IMR-90 (cell line): ENCODE measurements at regions of chr14 and their contacts with region 1.

Region 1: GRCh38 chr14:88667555-88668273 is 104.9 kb downstream of the ZC3H14 start:
- DNase-seq: peak; percentile 83
- ATAC-seq: peak; percentile 98
- H3K4me3 ChIP-seq: no peak overlapping the region
- H3K27ac ChIP-seq: no peak overlapping the region
- H3K4me1 ChIP-seq: 0 out of 2 replicates have a peak, but pooled peaks cover 3% of the 10 kb centered on the region
- H3K27me3 ChIP-seq: no peaks in the 10 kb centered on the region
- CTCF ChIP-seq: peak; percentile 91
- POLR2A ChIP-seq: no peak
- RAD21 ChIP-seq: peak; percentile 89

Region 2: DNA sequence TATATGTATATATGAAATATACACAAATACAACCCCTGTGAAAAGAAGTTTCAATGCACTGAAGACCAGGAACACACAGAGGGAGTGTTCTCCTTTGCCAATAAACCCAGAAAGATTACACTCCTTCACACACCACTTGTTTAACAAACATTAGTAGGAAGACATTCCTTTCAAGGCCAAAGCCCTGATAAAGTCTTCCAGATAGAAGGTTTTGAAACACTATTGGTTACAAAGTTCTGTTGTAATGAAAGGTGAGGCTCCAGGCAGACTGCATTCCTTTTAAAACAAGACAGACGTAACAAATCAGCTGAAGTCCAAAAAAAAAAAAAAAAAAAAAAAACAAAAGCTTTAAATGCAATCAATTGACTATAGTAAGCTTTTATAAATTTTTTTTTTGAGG is 193.9 kb before region 1 on chr14:
- CTCF ChIA-PET with region 1: no interaction called
- POLR2A ChIA-PET with region 1: no interaction called
- dilution Hi-C with region 1: no loop called
- in situ Hi-C with region 1: no loop called
- intact Hi-C with region 1: no loop called
- DNase-seq: peak; percentile 38
- ATAC-seq: peak; percentile 54
- H3K4me3 ChIP-seq: no peak overlapping the region
- H3K27ac ChIP-seq: peak overlapping the region; percentile 95; the same call in 1 of the 2 replicates
- H3K4me1 ChIP-seq: peaks cover 30% of the 10 kb centered on the region
- H3K27me3 ChIP-seq: no peaks in the 10 kb centered on the region
- CTCF ChIP-seq: no peak
- POLR2A ChIP-seq: no peak
- RAD21 ChIP-seq: no peak

Region 3: DNA sequence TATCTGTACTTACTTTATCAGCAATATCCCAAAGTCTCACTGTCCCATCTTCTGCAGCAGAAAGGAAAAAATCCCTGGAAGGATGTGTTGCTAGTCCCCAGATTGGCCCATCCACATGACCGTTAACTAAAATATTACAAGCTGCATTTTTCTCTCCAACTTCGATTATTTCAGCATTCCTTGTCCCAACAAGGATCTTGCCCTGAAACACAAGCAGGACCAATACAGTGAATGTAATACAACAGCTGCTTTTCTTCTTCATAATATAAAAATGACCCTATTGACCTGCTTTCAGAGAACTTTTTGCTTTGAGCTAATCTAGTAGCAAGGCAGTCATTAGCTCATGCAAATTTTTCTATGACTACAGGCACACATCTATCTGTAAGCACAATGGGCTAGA is 46.6 kb before region 1 on chr14:
- CTCF ChIA-PET with region 1: no interaction called
- POLR2A ChIA-PET with region 1: no interaction called
- dilution Hi-C with region 1: no loop called
- in situ Hi-C with region 1: no loop called
- intact Hi-C with region 1: no loop called
- DNase-seq: peak; percentile 21
- ATAC-seq: peak; percentile 81
- H3K4me3 ChIP-seq: no peak overlapping the region
- H3K27ac ChIP-seq: no peak overlapping the region
- H3K4me1 ChIP-seq: no peaks in the 10 kb centered on the region
- H3K27me3 ChIP-seq: no peaks in the 10 kb centered on the region
- CTCF ChIP-seq: no peak
- POLR2A ChIP-seq: no peak
- RAD21 ChIP-seq: no peak

Region 4: GRCh38 chr14:88868558-88869159 is 200.9 kb after region 1 on chr14:
- CTCF ChIA-PET with region 1: interaction called, 3 read pairs
- POLR2A ChIA-PET with region 1: no interaction called
- dilution Hi-C with region 1: no loop called
- in situ Hi-C with region 1: no loop called
- intact Hi-C with region 1: loop called (anchors 1 kb)
- DNase-seq: peak; percentile 23
- ATAC-seq: 0 out of 2 replicates have a peak, but pooled peaks have one; percentile 40
- H3K4me3 ChIP-seq: no peak overlapping the region
- H3K27ac ChIP-seq: no peak overlapping the region
- H3K4me1 ChIP-seq: peaks cover 2% of the 10 kb centered on the region
- H3K27me3 ChIP-seq: no peaks in the 10 kb centered on the region
- CTCF ChIP-seq: peak; percentile 29
- POLR2A ChIP-seq: no peak
- RAD21 ChIP-seq: peak; percentile 52

Region 5: GRCh38 chr14:89013084-89013504 is 345.4 kb after region 1 on chr14:
- CTCF ChIA-PET with region 1: interaction called, 5 read pairs
- POLR2A ChIA-PET with region 1: no interaction called
- dilution Hi-C with region 1: no loop called
- in situ Hi-C with region 1: loop called (anchors 5 kb)
- intact Hi-C with region 1: loop called (anchors 1 kb)
- DNase-seq: peak; percentile 11
- ATAC-seq: no peak
- H3K4me3 ChIP-seq: no peak overlapping the region
- H3K27ac ChIP-seq: no peak overlapping the region
- H3K4me1 ChIP-seq: no peaks in the 10 kb centered on the region; the same call in 1 of the 2 replicates
- H3K27me3 ChIP-seq: no peaks in the 10 kb centered on the region
- CTCF ChIP-seq: peak; percentile 51
- POLR2A ChIP-seq: no peak
- RAD21 ChIP-seq: peak; percentile 59

Region 6: DNA sequence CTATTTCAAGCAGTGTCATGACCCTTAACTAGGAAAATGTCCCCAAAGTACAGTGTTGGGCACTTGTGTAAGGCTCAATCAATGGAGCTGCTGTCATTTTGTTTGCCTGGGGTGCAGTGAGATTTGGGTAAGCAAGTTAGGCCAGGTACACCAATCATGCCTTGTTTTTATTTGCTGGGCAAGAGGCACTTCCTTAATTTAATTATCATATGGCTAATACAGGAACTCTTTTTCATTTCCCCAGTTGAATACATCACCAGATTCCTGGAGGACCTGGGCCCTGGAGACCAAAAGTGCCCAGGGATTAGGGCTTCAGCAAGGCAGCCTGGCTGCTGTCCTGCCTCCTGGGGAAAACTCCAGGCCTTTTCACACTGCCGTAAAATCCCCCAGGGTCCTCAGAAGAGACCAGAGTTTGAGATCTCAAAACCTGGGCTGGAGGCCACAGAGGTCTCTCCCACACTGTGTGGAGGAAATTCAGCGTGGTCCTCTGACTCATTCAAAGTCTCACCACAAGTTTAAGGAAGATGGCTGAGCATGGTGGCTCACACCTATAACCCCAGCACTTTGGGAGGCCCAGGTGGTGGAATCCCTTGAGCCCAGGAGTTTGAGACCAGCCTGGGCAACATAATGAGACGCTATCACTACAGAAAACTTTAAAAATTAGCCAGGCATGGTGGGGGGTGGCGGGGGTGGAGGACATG is 777.7 kb after region 1 on chr14:
- CTCF ChIA-PET with region 1: no interaction called
- POLR2A ChIA-PET with region 1: no interaction called
- dilution Hi-C with region 1: no loop called
- in situ Hi-C with region 1: no loop called
- intact Hi-C with region 1: no loop called
- DNase-seq: peak; percentile 33
- ATAC-seq: no peak
- H3K4me3 ChIP-seq: no peak overlapping the region
- H3K27ac ChIP-seq: no peak overlapping the region
- H3K4me1 ChIP-seq: peaks cover 17% of the 10 kb centered on the region
- H3K27me3 ChIP-seq: no peaks in the 10 kb centered on the region
- CTCF ChIP-seq: no peak
- POLR2A ChIP-seq: no peak
- RAD21 ChIP-seq: no peak

Region 7: DNA sequence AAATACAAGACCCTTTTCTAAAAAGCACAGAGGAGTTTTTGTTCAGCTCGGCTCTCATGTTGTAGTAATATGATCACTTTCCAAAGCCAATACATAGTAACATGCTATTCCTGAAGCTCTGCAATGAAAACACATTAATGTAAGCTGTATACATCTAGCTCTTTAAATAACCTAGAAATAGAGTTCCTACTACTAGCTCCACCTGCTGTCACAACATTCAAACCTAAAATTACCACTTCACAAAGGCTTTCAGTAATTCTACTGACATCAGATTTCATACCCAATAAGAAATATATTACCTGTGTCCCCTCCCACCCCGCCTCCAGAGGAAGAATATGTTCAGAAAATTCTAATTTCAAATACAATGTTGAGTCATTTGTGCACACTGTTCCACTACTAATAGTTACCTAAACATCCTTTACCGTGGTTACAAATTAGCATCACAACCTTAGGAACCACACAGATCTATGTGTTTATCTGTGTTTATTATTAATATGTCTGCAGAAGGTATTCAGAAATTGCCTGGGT is 1269.0 kb after region 1 on chr14:
- CTCF ChIA-PET with region 1: no interaction called
- POLR2A ChIA-PET with region 1: no interaction called
- dilution Hi-C with region 1: no loop called
- in situ Hi-C with region 1: loop called (anchors 25 kb)
- intact Hi-C with region 1: no loop called
- DNase-seq: no peak
- ATAC-seq: peak; percentile 40; the same call in 1 of the 2 replicates
- H3K4me3 ChIP-seq: no peak overlapping the region
- H3K27ac ChIP-seq: no peak overlapping the region
- H3K4me1 ChIP-seq: no peaks in the 10 kb centered on the region
- H3K27me3 ChIP-seq: no peaks in the 10 kb centered on the region
- CTCF ChIP-seq: peak; percentile 35
- POLR2A ChIP-seq: no peak
- RAD21 ChIP-seq: peak; percentile 31; the same call in 1 of the 2 replicates